Posterior cingulate gyrus (tissue), 11 donors: ENCODE measurements at regions of chr11 and their contacts with region 1.

Region 1: GRCh38 chr11:85664615-85665481 is at the start of gene CREBZF:
- DNase-seq: peak; percentile 91 to 99 (median 94)

Region 2: GRCh38 chr11:85196968-85197367 is 467.9 kb before region 1 on chr11:
- intact Hi-C with region 1: no loop called
- DNase-seq: no peak

Region 3: GRCh38 chr11:85369731-85370130 is 295.1 kb before region 1 on chr11:
- intact Hi-C with region 1: no loop called
- DNase-seq: no peak

Region 4: GRCh38 chr11:85423305-85423704 is 241.5 kb before region 1 on chr11:
- intact Hi-C with region 1: no loop called
- DNase-seq: no peak

Region 5: DNA sequence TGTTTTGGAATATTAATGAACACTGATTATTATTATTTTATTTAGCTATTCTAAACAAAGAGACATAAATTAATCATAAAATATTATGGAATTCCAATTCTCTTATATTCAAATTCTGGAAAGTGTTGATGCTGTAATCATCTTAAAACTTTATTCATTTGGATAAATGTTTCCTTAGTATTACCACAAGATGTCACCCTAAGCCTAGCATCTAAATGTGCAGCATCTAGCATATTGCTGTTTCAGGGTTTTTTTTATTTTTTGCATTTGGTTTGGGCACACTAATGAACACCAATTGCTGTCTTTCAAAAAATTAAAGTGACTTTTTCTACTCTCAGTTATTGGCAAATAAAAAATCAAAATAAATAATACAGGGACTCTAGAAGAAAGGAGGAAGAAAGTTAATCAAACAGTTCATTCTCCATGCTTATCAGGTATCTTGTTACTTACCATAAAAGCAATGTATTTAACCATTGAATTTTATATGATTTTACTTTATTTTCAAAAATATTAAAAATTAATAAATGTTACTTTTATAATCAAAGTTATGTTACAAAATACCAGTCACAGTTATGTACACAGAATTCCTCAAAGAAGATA is 69.5 kb before region 1 on chr11:
- intact Hi-C with region 1: loop called (anchors 5 kb)
- DNase-seq: no peak

Region 6: GRCh38 chr11:85627998-85628770 is 36.7 kb before region 1 on chr11 and contains the start of gene TMEM126B:
- intact Hi-C with region 1: loop called (anchors 1 kb)
- DNase-seq: peak; percentile 97 to 100 (median 98)

Region 7: DNA sequence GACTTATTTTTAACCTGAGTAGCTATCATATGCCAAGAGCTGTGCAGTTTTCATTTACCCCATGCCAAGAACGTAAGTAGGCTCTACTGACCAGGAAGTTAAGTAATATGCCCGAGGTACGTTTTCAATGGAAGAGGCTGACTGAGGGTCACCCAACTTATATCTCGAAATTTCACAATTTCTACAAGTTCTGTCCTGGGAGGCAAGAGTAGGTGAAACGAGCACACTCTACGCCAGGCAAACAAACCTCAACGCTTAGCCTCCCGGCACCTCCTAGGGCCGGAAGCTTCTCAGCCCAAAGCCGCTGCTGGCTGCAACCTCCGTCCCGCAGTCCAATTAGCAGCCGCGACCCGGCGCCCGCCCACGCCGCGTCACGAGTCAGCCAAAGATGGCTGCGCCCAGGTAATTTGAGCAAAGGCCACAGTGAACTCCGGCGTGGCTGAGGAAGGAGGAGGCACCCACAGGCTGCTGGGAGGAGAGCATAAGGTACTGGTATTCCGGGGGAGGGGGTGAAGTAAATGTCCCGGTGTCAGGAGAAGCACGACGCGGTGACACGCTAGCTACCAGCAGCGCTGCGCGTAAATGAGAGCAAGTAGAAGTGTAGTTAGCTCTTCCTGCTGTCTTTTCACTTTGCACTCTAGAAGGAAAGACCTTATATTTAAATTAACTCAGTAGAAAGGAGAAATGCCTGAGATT is 17.1 kb before region 1 on chr11 and contains the start of gene TMEM126A:
- intact Hi-C with region 1: loop called (anchors 2 kb)
- DNase-seq: peak; percentile 83 to 98 (median 90)

Region 8: DNA sequence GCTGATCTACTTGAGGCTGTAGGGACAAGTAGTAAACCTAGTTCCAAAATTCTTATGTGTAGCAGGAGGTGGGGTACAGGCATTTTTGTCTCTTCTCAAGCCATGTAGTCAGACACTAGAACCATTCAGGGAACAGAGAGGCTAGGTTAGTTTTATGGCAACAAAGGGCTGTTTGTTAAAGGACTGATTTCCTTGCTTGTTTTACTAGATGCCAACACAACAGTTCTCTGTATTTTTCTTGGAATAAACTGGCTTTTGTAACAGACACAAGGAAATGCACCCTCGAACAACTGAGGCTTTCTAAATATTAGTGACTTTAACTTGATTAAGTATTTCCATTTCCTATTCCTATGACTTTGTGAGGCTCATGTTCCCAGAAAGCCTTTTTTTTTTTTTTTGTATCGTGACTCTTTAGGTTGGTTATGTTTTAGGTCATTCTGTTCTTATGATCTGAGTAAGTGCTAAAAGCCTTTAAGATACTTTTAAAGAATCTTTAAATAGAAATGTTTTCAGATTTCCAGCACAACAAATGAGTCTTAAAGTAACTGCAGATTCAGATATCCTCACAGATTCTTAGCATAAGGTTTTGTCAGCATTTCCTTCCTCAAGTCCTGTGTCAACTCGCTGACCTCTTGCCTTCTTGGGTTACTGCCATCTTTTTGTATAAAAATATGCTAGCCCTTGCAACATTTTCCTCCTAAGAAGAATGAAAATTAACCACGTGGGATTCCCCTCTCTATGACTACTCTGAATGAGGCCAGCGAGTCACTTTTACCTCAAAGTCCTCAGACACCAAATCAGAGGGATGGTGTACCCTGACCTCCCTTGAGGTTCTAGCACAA is 282.8 kb after region 1 on chr11:
- intact Hi-C with region 1: no loop called
- DNase-seq: no peak

Region 9: DNA sequence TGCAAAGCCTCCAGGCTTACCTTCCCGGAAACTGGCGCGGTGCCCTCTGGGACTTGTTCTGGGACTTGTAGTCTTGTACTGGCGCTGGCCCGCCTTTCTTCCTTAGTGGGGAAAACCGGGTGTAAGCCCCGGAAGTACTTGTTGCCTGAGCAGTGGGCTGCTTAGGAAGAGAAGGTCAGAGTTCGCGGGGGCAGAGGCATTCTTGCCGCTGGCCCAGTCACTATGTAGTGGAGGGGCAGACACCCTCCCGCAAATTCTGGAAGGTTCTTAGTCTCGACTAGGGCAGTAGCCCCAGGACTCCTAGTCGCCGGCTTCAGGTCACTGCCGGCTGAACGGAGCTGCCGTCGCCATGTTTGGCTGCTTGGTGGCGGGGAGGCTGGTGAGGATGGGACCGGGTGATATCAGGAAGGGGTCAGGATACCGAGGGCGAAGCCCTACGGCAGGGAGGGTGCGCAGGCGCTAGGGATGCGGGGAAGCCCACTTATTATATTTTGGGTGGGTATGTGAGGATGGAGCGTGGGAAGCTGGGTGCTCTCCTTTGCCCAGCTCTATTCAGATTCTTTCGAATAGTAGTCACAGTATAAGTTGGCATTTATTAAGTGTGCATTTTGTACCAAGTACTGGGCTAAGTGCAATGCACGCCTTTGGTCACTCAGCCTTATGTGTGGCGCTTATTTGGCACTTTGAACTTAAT is 637.4 kb after region 1 on chr11 and contains the start of gene HIKESHI:
- intact Hi-C with region 1: loop called (anchors 10 kb)
- DNase-seq: peak; percentile 100